ENCODE measurements at regions of chr22 and their contacts with region 1.

Region 1: DNA sequence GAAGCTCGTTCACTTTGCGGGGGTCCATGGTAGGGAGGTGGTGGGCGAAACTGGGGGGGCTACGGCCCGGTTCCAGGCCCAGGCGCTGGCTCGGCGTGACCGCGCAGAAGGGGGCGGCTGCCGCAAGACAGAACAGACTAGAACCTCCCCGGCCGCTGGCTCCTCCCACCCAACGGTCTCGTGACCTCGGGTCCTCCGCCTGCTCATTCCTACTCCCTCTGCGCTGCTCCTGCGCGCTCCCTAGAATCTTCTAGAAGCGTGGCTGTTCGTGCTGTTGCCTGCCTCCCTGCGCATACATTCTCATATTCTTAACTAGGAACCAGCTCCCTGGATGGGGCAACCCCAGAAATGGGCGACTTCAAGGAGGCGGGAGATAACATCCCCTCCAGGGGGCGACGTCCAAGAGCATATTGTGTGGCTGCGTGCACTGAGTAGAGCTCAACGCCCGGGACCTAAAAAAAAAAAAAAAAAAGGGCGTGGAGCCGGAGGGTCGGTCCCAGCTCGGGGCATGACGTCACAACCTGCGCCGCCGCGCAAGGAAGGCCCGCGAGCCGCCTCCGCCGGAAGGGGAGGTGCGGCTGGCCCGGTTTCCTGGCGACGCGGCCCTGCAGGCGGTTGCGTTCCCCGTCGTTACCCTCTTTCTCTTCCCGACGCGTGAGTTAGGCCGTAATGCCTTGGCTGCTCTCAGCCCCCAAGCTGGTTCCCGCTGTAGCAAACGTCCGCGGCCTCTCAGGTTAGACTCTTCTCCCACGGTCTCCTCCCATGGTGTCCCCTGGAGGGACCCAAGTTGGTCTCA is at the starts of genes ST13 and XPNPEP3:
- DNase-seq: peak; percentile 97

Region 2: GRCh38 chr22:40818747-40819598 is 37.7 kb before region 1 on chr22 and contains the start of gene SLC25A17:
- CTCF ChIA-PET with region 1: no interaction called
- POLR2A ChIA-PET with region 1: interaction called, 11 read pairs
- DNase-seq: peak; percentile 98

Region 3: DNA sequence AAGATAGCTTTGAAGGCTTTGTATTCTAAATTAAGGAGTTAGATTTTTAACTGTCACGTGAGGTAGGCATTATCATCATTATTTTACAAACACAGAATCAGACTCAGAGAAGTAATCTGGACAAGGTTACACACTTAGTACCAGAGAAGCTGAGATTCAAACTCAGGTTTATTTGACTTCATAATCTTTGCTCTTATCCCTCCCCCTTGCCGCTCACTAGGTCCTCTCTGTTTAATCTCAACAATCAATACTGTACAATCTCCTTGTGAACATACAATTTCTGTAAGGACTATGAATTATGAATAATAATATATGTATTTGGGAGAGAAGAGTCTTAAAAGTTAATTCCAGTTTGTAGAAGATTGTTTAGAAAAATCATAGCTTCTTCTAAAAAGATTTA is 10.4 kb after region 1 on chr22:
- CTCF ChIA-PET with region 1: no interaction called
- POLR2A ChIA-PET with region 1: interaction called, 29 read pairs
- DNase-seq: no peak